Activated naive CD4-positive, alpha-beta T cell treated with anti-CD3 and anti-CD28 coated beads, Interleukin-2, amount 10 ng/mL, durations not matched to agents 7 days and 5 days (primary cell): ENCODE measurements at regions of chr7 and their contacts with region 1.

Region 1: DNA sequence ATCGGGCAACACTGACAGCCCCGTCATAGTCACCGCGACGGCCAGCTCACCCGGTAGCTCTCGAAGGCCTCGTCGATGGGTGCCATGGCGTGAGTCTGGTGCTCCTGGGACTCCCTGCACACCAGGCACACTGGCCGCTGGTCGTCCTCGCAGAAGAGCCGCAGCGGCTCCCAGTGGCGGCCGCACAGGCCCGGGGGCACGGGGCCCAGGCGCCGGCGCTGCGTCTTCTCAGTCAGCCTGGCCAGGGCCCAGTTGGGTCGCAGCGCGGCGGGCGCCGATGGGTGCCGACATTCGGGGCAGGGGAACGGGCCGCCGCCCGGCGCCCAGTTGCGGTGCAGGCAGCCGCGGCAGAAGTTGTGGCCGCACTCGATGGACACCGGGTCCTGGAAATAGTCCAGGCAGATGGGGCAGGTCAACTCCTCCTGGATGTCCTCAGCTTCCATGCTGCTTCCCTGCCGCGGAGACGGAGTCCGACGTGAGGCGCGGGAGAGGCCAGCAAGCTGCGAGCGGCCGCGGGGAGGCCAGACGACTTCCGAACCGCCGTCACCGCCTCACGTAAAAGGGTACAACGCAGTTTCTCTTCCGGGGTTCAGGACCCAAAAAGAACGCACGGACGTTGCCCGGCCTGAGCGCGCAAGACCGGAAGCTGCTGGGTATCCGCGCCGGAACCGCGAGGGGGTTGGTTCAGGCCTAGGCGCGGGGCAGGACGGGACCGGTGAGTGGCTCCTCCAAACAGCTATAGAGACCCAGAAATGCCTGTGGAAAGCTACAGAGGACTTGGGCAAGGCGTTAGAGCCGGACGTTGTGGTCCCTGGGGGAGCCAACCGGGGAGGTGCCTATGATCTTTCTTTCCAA is at the start of gene TRIM4:
- DNase-seq: peak; percentile 94
- H3K4me3 Mint-ChIP-seq: peak within 1 kb of the TSS; percentile 95
- H3K27ac Mint-ChIP-seq: peak within 1 kb of the TSS; percentile 96
- H3K4me1 Mint-ChIP-seq: peaks cover 50% of the 10 kb centered on the region
- H3K27me3 Mint-ChIP-seq: peaks cover 5% of the 10 kb centered on the region

Region 2: GRCh38 chr7:99897322-99898022 is 21.7 kb before region 1 on chr7:
- CTCF ChIA-PET with region 1: no interaction called
- DNase-seq: no peak
- H3K4me3 Mint-ChIP-seq: no peak overlapping the region
- H3K27ac Mint-ChIP-seq: no peak overlapping the region
- H3K4me1 Mint-ChIP-seq: peaks cover 6% of the 10 kb centered on the region
- H3K27me3 Mint-ChIP-seq: no peaks in the 10 kb centered on the region

Region 3: GRCh38 chr7:99938296-99938695 is 19.1 kb after region 1 on chr7:
- CTCF ChIA-PET with region 1: interaction called, 10 read pairs
- DNase-seq: no peak
- H3K4me3 Mint-ChIP-seq: no peak overlapping the region
- H3K27ac Mint-ChIP-seq: no peak overlapping the region
- H3K4me1 Mint-ChIP-seq: peaks cover 13% of the 10 kb centered on the region
- H3K27me3 Mint-ChIP-seq: peaks cover 27% of the 10 kb centered on the region

Region 4: DNA sequence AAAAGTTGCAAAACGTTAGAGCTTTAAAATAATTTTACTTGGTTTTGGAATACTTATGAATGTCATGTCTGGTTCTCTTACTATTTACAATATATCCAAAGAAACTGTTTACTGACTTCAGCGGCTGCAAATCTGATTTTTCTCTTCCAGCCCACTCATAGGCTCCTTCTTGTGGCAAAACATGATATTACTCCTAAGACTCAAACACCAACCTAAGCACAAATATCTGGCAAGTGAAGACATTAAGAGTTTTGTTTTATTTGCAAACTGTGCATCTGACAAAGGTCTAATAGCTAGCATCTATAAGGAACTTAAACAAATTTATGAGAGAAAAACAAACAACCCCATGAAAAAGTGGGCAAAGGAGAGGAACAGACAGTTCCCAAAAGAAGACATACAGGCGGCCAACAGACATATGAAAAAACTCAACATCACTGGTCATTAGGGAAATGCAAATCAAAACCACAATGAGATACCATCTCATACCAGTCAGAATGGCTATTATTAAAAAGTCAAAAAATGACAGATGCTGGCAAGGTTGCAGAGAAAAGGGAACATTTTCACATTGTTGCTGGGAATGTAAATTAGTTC is 30.5 kb after region 1 on chr7:
- CTCF ChIA-PET with region 1: interaction called, 10 read pairs
- DNase-seq: no peak
- H3K4me3 Mint-ChIP-seq: no peak overlapping the region
- H3K27ac Mint-ChIP-seq: no peak overlapping the region
- H3K4me1 Mint-ChIP-seq: no peaks in the 10 kb centered on the region
- H3K27me3 Mint-ChIP-seq: peaks cover 20% of the 10 kb centered on the region

Region 5: DNA sequence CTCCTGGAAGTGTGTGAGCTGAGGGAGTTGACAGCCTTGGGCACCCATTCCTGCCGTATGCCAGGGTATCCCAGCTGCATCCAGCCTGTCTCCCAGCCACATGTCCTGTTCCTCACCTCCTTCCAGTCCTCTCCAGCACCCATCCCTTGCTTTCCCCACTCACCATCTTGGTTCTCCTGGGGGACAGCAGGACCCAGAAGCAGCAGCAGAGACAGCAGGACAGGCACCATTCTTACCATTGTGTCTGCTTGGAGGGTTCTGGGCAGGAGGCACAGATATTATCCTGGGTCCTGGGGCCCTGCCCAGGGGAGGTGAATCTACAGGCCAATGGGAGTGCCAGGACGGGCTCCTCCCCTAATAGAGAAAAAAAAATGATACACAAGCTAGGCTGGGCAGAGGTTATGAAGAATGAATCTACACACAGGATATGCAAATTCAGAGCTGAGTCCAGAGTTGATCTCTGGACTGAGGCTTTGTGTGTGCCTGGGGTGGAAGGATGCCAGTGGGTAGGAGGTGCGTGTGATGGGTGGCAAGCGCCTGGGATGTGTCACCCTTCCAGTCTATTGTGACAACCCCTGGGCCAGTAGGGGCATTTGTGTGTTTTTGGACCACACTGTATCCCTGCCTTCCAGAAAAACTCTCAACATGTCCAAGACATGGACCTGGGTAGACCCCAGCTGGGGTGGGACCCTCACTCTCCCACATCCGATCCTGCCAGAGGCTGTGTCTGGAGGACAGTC is 56.8 kb after region 1 on chr7 and contains the start of gene AZGP1:
- CTCF ChIA-PET with region 1: interaction called, 15 read pairs
- DNase-seq: no peak
- H3K4me3 Mint-ChIP-seq: no peak within 1 kb of the TSS
- H3K27ac Mint-ChIP-seq: no peak within 1 kb of the TSS
- H3K4me1 Mint-ChIP-seq: no peaks in the 10 kb centered on the region
- H3K27me3 Mint-ChIP-seq: peaks cover 25% of the 10 kb centered on the region

Region 6: GRCh38 chr7:99997545-99998137 is 78.5 kb after region 1 on chr7:
- CTCF ChIA-PET with region 1: interaction called, 169 read pairs
- DNase-seq: peak; percentile 81
- H3K4me3 Mint-ChIP-seq: peak overlapping the region; percentile 66
- H3K27ac Mint-ChIP-seq: peak overlapping the region; percentile 87
- H3K4me1 Mint-ChIP-seq: peaks cover 29% of the 10 kb centered on the region
- H3K27me3 Mint-ChIP-seq: peaks cover 39% of the 10 kb centered on the region